T-cell (primary cell): ENCODE measurements at regions of chr4 and their contacts with region 1.

Region 1: DNA sequence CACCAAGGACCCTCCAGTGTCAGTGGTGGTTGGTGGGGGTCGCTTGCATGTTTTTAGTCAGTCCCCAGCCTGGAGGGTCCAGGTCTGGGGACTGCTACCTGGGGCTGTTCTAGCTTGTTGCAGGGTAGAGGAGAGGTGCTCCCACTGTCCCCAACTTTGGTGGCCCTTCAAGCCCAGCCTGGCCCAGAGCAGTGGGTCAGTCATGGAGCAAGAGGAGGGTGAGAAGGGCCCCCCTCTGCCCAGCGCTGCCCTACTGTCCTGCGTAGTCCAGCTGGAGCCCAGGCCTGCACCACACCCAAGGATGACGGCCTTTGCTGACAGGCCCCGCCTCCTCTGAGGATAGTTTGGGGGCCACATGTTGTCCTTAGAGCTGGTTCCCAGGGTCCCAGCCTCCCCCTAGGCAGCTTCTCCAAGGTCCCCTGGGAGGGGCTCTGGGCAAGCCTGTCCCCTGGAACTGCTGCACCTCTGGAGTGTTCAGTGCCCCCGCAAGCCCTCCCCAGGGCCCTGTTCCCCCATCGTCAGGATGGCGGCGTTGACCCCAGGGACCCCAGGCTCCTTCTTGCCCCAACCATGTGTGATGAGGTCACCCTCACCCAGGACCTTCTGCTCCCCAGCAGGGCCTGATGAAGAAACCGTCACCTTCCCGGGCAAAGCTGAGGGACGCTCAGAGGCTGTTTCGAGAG is 6.8 kb downstream of the CFAP99 start:
- DNase-seq: no peak
- ATAC-seq: no peak
- H3K4me3 ChIP-seq: no peak overlapping the region
- H3K4me3 Mint-ChIP-seq: no peak overlapping the region
- H3K27ac ChIP-seq: no peak overlapping the region
- H3K27ac Mint-ChIP-seq: no peak overlapping the region
- H3K4me1 ChIP-seq: no peaks in the 10 kb centered on the region
- H3K4me1 Mint-ChIP-seq: peaks cover 0 to 4% (median 2%) of the 10 kb centered on the region in 3 donors
- H3K27me3 ChIP-seq: peaks cover 3 to 44% of the 10 kb centered on the region in 2 experiments
- H3K27me3 Mint-ChIP-seq: peaks cover 3 to 22% of the 10 kb centered on the region in 2 donors

Region 2: DNA sequence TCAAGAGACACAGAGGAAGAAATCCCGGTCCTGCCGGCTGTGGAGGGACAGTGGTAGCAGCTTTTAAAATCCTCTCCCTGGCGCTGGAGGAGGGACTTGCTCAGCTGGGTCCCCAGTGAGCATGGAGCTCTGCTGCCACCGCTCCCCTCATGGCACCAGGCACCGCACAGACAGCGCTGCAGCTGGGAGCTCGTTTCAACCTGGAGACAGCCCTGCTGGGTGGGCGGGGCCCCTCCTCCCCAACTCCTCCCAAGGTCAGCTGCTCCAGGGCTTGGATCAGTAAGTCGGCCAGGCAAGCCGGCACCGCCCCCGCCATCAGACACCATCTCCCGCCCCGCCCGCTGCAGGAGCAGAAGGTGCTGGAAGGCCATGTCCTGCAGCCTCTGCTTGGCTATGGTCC is 23.5 kb before region 1 on chr4:
- CTCF ChIA-PET with region 1: no interaction called
- POLR2A ChIA-PET with region 1: interaction called in 1 of 2 experiments, 17 read pairs
- DNase-seq: peak in 9 of 35 experiments; percentile 10 to 46 (median 20)
- ATAC-seq: peak; percentile 57 to 73 (median 68)
- H3K4me3 ChIP-seq: peak overlapping the region; percentile 39 to 67
- H3K4me3 Mint-ChIP-seq: peak overlapping the region; percentile 65 to 84 (median 77)
- H3K27ac ChIP-seq: no peak overlapping the region
- H3K27ac Mint-ChIP-seq: no peak overlapping the region
- H3K4me1 ChIP-seq: peaks cover 0 to 26% of the 10 kb centered on the region in 2 experiments
- H3K4me1 Mint-ChIP-seq: peaks cover 29 to 55% (median 30%) of the 10 kb centered on the region in 3 donors
- H3K27me3 ChIP-seq: peaks cover 0 to 14% of the 10 kb centered on the region in 2 experiments
- H3K27me3 Mint-ChIP-seq: no peaks in the 10 kb centered on the region